ENCODE measurements at regions of chr3 and their contacts with region 1.

Region 1: GRCh38 chr3:4565806-4566501 is 72.8 kb downstream of the ITPR1 start:
- DNase-seq: peak; percentile 84
- ATAC-seq: peak; percentile 82
- H3K4me3 ChIP-seq: peak overlapping the region; percentile 8; the same call in 1 of the 2 replicates
- H3K27ac ChIP-seq: peak overlapping the region; percentile 87
- H3K4me1 ChIP-seq: peaks cover 50% of the 10 kb centered on the region
- H3K27me3 ChIP-seq: no peaks in the 10 kb centered on the region
- CTCF ChIP-seq: no peak

Region 2: DNA sequence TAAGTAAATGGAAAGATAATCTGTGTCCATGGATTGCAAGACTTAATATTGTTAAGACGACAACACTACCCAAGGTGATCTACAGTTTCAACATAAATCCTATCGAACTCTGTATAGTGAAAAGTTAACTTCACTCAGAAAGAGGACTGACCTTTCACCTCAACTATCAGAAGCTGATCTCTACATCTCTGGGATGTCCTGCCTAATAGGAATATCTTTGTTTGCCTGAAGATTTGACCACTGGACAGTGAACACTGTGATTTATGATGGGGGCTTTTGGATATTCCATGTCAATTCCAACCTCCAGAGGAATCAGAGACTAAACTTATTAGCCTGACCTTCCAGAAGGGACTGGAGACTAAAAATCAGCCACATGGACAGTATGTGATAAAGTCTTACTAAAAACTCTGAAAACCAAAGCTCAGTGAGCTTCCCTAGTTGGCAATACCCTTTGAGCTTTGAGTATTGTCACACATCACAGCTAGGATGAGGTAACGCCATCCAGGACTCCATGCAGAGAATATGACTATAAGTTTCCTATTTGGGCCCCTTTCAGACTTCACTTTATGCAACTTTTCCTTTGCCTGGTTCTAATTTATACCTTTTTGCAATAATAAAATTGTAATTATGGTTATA is 427.7 kb before region 1 on chr3:
- CTCF ChIA-PET with region 1: no interaction called
- POLR2A ChIA-PET with region 1: no interaction called
- intact Hi-C with region 1: no loop called
- DNase-seq: no peak
- ATAC-seq: no peak
- H3K4me3 ChIP-seq: no peak overlapping the region
- H3K27ac ChIP-seq: no peak overlapping the region
- H3K4me1 ChIP-seq: no peaks in the 10 kb centered on the region
- H3K27me3 ChIP-seq: no peaks in the 10 kb centered on the region
- CTCF ChIP-seq: no peak

Region 3: GRCh38 chr3:4334548-4334947 is 231.4 kb before region 1 on chr3:
- CTCF ChIA-PET with region 1: no interaction called
- POLR2A ChIA-PET with region 1: no interaction called
- intact Hi-C with region 1: loop called (anchors 5 kb)
- DNase-seq: peak; percentile 42
- ATAC-seq: no peak; the same call in 1 of the 2 replicates
- H3K4me3 ChIP-seq: no peak overlapping the region
- H3K27ac ChIP-seq: no peak overlapping the region
- H3K4me1 ChIP-seq: no peaks in the 10 kb centered on the region
- H3K27me3 ChIP-seq: no peaks in the 10 kb centered on the region
- CTCF ChIP-seq: peak; percentile 64

Region 4: DNA sequence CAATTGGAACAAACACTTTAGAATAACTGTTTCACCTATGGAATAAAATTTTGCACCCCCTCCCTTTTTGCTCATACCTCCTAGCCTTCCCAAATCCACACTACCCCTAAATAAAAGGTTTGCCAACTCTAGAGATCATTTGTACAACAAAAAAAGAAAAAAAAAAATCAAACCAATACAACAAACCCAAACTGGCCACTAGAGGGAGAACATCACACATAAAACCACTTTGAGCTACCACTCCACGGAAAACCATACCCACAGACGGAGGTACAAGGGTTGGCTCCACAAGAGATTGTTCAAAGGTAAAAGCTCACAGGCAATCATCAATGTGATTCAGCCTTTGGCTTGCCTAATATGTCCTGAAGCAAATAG is 215.2 kb before region 1 on chr3:
- CTCF ChIA-PET with region 1: interaction called, 3 read pairs
- POLR2A ChIA-PET with region 1: no interaction called
- intact Hi-C with region 1: loop called (anchors 5 kb)
- DNase-seq: peak; percentile 76
- ATAC-seq: peak; percentile 78
- H3K4me3 ChIP-seq: no peak overlapping the region
- H3K27ac ChIP-seq: no peak overlapping the region
- H3K4me1 ChIP-seq: peaks cover 10% of the 10 kb centered on the region
- H3K27me3 ChIP-seq: no peaks in the 10 kb centered on the region
- CTCF ChIP-seq: peak; percentile 93